Activated T-helper 2 cell treated with anti-CD3 and anti-CD28 coated beads, Interferon-gamma antibody, Interleukin-2, Interleukin-4, amounts not matched to agents 10 μg/mL and 5 μg/mL and 100 μg/mL, durations not matched to agents 14 hours and 24 hours and 36 hours (primary cell): ENCODE measurements at regions of chrX and their contacts with region 1.

Region 1: DNA sequence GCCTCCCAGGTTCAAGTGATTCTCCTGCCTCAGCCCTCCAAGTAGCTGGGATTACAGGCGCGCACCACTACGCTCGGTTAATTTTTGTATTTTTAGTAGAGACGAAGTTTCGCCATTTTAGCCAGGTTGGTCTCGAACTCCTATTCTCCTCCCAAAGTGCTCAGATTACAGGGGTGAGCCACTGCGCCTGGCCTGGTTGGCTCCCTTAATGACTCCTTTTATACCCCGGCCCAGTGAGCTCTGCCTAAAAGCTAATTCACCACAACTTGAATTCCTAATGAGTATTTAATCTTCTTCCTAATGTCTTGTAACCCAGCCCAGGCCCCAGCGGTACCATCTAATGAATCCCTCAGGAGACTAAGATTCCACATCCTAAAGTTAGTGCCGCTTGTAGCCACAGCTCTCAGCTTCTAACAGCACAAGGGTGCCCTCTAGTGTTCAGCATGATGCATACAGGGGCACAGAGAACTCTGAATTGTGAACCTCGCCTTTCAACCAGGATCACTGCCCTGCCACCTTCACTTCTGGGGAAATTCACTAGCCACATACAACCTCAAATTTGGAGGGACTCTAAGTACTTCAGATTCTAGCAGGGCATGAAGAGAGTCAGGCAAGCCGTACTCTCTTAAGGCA is 89.5 kb downstream of the OR13H1 start:
- DNase-seq: peak; percentile 10
- H3K4me3 Mint-ChIP-seq: no peak overlapping the region
- H3K27ac Mint-ChIP-seq: no peak overlapping the region
- H3K4me1 Mint-ChIP-seq: no peaks in the 10 kb centered on the region
- H3K27me3 Mint-ChIP-seq: peaks cover 2% of the 10 kb centered on the region

Region 2: GRCh38 chrX:130975947-130976346 is 657.5 kb before region 1 on chrX:
- intact Hi-C with region 1: loop called (anchors 10 kb)
- DNase-seq: no peak
- H3K4me3 Mint-ChIP-seq: no peak overlapping the region
- H3K27ac Mint-ChIP-seq: no peak overlapping the region
- H3K4me1 Mint-ChIP-seq: no peaks in the 10 kb centered on the region
- H3K27me3 Mint-ChIP-seq: peaks cover 4% of the 10 kb centered on the region

Region 3: DNA sequence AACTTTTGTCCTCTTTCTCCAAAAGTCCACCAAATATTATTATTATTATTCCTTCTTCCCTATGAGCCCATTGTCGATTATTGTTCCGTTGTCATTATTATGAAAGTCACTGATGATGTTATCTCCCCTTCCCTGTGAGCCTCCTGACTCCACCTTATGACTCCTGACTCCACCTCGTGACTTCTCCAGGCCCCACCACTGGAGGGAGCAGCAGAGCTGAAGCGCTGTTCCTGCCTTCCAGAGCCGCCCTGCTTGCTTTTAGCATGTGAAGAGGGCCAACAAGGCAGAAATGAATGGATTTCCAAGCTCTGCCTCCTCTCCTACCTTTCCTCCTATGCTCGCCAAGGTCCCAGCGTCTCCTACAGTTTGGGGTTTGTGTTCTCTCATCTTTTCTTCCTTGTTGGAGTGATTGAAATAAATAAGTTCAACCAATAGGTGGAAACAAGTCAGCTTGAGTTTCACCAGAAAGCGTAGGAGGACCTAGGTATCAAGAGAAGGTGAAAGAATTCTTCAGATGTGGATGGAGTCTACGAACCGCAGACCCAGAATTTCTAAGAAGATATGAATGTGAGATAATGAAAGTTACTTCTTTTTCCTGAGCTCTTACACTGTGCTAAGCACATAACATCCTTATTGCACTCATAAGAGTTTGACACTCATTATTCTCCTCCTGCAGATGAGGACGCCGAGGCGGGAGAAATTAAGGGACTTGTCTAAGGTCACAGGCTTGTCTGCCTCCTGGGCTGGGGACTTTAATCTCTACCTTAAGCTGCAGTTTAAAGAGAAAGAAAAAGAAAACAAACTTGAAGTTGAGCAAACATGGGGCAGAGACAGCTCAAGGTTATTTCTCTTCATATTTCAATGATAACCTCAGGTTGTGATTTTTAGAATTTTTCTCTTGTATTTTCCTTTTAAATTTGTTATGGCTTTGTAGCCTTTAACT is 370.4 kb before region 1 on chrX:
- intact Hi-C with region 1: loop called (anchors 10 kb)
- DNase-seq: no peak
- H3K4me3 Mint-ChIP-seq: no peak overlapping the region
- H3K27ac Mint-ChIP-seq: no peak overlapping the region
- H3K4me1 Mint-ChIP-seq: peaks cover 2% of the 10 kb centered on the region
- H3K27me3 Mint-ChIP-seq: no peaks in the 10 kb centered on the region

Region 4: DNA sequence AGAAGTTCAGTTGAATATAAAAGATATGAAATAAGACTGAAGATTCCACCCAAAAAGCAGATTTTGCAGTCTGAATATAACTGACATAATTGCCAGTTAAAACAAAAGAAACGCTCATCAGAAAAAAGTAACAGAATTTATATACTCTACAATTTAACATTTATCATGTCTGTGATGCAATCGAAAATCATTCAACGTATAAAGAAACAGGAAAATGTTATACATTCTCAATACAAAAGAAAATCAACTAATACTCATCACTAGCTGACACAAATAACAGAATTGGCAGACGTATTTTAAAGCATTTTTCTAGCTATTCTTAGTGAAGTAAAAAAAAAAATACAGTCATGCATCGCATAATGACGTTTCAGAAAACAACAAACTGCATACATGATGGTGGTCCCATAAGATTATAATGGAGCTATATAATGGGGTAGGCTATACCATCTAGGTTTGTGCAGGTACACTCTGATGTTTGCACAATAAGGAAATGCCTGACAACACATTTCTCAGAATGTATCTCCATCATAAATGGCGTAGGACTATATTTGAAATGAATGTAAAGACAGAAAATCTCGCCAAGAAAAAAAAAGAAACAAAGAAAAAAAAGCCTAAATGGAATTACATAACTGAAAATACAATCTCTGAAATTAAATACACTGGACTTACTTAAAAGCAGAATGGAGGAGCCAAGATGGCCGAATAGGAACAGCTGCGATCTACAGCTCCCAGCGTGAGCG is 55.2 kb before region 1 on chrX:
- intact Hi-C with region 1: no loop called
- DNase-seq: no peak
- H3K4me3 Mint-ChIP-seq: no peak overlapping the region
- H3K27ac Mint-ChIP-seq: no peak overlapping the region
- H3K4me1 Mint-ChIP-seq: no peaks in the 10 kb centered on the region
- H3K27me3 Mint-ChIP-seq: no peaks in the 10 kb centered on the region